ENCODE measurements at regions of chr1 and their contacts with region 1.

Region 1: DNA sequence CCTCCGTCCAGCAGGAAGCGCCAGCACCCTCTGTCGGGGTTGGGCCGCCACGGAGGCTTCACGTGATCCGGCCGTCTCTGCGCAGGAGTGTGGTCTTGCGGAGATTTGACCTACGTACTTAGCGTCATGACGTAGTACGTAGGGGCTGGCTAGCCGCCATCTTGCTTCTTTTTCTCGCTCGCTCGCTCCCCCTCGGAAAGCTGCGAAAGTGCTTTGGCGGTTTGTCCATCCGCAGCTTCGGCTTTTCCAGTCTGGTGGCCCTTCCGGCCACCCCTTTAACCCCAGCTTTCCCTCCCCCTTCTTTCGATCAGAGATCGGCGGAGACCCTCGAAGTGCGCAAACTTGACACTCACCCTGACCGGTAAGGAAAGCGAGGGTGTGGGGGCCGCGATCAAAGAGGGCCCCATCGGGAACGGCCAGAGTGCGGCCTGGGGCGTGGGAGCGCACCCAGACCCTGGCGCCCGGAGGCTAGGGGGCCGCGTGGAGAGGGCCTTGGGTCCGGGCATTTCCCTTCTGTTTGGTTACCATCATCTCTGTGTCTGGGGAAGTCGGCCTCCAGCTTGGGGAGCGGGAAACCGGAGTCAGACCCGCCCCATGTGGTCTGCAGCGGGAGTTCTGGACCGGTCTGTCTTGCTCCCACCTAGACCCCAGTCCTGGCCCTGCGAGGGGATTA is at the start of gene PRRC2C:
- DNase-seq: peak; percentile 92 to 99 (median 93)
- ATAC-seq: peak; percentile 95
- H3K4me3 ChIP-seq: peak within 1 kb of the TSS; percentile 91
- H3K27ac ChIP-seq: peak within 1 kb of the TSS; percentile 93
- H3K4me1 ChIP-seq: peaks cover 3 to 11% of the 10 kb centered on the region in 2 experiments; a peak in 4 of 5 replicates
- H3K27me3 ChIP-seq: no peaks in the 10 kb centered on the region
- CTCF ChIP-seq: peak; percentile 85 to 97 (median 95)
- EP300 ChIP-seq: peak; percentile 54
- POLR2A ChIP-seq: peak; percentile 95
- RAD21 ChIP-seq: peak; percentile 69 to 76
- polyA plus RNA-seq, gene PRRC2C: 61.9 to 93.0 TPM

Region 2: DNA sequence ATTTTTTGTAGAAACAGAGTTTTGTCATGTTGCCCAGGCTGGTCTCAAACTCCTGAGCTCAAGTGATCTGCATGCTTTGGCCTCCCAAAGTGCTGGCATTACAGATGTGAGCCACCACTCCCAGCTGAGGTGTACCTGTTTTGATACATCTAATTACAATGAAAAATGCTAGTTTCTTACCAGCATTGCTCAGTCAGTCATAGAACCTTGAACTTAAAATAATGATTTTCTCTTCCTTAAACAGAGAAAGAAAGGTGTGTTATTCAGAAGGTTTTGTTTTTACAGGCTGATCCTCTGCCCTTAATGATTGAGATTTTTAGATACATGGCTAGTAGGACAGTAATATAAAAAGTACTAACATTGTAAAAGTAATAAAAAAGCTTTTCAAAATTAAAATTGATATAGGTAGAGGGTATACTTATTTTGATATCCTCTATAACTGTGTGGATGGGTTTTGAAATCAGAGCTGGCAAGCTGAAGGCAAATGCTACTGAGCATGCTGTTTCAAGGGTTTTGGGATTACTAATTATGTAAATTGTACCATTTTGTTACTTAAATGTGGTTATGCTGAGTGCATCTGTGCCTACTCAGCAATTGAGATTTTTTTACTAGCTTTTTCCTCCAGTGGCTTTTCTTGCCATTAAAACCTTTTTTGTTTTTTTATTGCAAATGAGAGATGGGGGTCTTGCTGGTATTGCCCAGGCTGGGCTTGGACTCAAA is 16.0 kb after region 1 on chr1:
- CTCF ChIA-PET with region 1: no interaction called
- POLR2A ChIA-PET with region 1: interaction called, 34 read pairs
- in situ Hi-C with region 1: no loop called
- intact Hi-C with region 1: no loop called
- DNase-seq: no peak
- ATAC-seq: no peak
- H3K4me3 ChIP-seq: no peak overlapping the region
- H3K27ac ChIP-seq: no peak overlapping the region
- H3K4me1 ChIP-seq: no peaks in the 10 kb centered on the region; a peak in 1 of 5 replicates
- H3K27me3 ChIP-seq: no peaks in the 10 kb centered on the region
- CTCF ChIP-seq: no peak
- EP300 ChIP-seq: no peak
- POLR2A ChIP-seq: no peak
- RAD21 ChIP-seq: no peak

Region 3: DNA sequence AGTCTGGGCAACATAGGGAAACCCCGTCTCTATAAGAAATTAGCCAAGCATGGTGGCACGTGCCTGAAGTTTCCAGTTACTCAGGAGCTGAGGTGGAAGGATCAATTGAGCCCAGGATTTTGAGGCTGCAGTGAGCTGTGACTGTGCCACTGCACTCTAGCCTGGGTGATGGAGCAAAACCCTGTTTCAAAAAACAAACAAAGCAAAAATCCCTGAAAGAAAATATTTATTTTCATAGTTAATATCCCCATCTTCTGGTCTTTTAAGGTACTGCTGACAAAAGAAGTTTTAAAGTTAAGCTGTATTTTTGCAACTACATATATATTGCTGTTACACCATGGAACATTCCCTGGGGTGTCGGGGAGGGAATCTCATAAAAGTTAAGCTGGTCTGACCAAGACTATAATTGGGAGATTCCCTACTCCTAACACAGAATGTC is 230.3 kb after region 1 on chr1:
- CTCF ChIA-PET with region 1: no interaction called
- POLR2A ChIA-PET with region 1: no interaction called
- in situ Hi-C with region 1: no loop called
- intact Hi-C with region 1: loop called (anchors 10 kb)
- DNase-seq: peak in 1 of 4 experiments; percentile 23
- ATAC-seq: peak; percentile 55
- H3K4me3 ChIP-seq: no peak overlapping the region
- H3K27ac ChIP-seq: no peak overlapping the region
- H3K4me1 ChIP-seq: peaks cover 0 to 4% of the 10 kb centered on the region in 2 experiments; a peak in 2 of 5 replicates
- H3K27me3 ChIP-seq: no peaks in the 10 kb centered on the region
- CTCF ChIP-seq: peak; percentile 30 to 66 (median 45); a peak in 4 of 6 replicates
- EP300 ChIP-seq: no peak
- POLR2A ChIP-seq: no peak
- RAD21 ChIP-seq: peak; percentile 37 to 48; a peak in 3 of 4 replicates

Region 4: DNA sequence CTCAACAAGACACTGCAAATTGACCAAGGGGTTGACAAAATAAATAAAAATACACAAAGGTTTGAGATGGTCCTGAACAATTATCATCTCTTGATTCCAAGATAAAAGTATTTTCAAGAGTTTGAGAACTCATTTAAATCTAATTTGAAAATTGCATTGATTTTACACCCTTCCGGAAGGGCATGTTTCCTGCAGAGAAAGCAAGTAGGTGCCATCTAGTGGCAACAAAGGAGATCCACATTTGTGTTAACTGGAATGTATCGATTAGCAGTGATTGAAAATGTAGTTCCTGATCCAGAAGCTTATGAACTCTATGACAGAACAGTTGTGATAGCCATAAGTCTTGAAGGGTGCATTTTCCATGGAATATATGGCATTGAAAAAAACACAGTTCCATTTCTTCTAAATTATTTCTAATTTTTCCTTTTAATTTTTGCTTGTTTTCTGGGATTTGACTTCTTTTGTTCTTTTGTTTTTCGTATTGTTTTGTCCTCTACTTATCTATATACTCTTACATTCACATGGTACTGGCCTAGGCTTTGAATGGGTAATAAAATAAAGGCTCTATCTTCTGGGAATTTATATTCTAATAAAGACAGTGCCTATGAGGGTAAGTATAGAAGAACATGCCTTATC is 499.5 kb after region 1 on chr1:
- CTCF ChIA-PET with region 1: no interaction called
- POLR2A ChIA-PET with region 1: no interaction called
- in situ Hi-C with region 1: no loop called
- intact Hi-C with region 1: loop called (anchors 10 kb)
- DNase-seq: peak; percentile 23 to 34 (median 28)
- ATAC-seq: peak; percentile 76
- H3K4me3 ChIP-seq: no peak overlapping the region
- H3K27ac ChIP-seq: no peak overlapping the region
- H3K4me1 ChIP-seq: no peaks in the 10 kb centered on the region
- H3K27me3 ChIP-seq: no peaks in the 10 kb centered on the region
- CTCF ChIP-seq: peak; percentile 62 to 78 (median 67); a peak in 5 of 6 replicates
- EP300 ChIP-seq: no peak
- POLR2A ChIP-seq: no peak
- RAD21 ChIP-seq: peak; percentile 69 to 87

Measured in K562 (cell line).